ENCODE measurements at regions of chr2 and their contacts with region 1.

Region 1: DNA sequence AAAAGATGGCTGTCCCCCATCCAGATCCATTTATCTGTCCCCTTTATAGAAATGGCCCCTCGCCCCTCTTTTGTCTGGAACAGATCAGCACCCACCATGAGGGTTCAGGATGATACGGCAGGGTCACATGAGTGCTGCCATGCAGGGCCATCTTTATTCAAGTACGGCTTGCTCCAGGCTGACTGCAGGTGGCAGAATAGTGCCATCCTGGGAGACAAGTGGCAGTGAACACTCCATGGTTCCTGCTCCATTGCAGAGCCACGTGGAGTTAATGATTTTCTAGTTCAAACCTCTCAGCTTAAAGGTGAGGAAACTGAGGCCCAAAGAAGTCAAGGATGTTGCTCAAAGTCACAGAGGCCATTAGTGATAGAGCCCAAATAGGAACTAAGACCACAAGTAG is 180.6 kb downstream of the CLIP4 start:
- DNase-seq: peak in 1 of 2 donors; percentile 13
- ATAC-seq: no peak
- H3K4me3 ChIP-seq: no peak overlapping the region
- H3K4me3 Mint-ChIP-seq: no peak overlapping the region
- H3K27ac ChIP-seq: no peak overlapping the region
- H3K27ac Mint-ChIP-seq: no peak overlapping the region
- H3K4me1 ChIP-seq: no peaks in the 10 kb centered on the region
- H3K4me1 Mint-ChIP-seq: no peaks in the 10 kb centered on the region
- H3K27me3 ChIP-seq: peaks cover 8% of the 10 kb centered on the region
- H3K27me3 Mint-ChIP-seq: peaks cover 28 to 53% of the 10 kb centered on the region in 2 donors
- CTCF ChIP-seq: no peak

Region 2: GRCh38 chr2:29260151-29260772 is 35.6 kb before region 1 on chr2:
- intact Hi-C with region 1: no loop called
- DNase-seq: no peak
- ATAC-seq: no peak
- H3K4me3 ChIP-seq: no peak overlapping the region
- H3K4me3 Mint-ChIP-seq: no peak overlapping the region
- H3K27ac ChIP-seq: no peak overlapping the region
- H3K27ac Mint-ChIP-seq: no peak overlapping the region
- H3K4me1 ChIP-seq: no peaks in the 10 kb centered on the region
- H3K4me1 Mint-ChIP-seq: no peaks in the 10 kb centered on the region
- H3K27me3 ChIP-seq: no peaks in the 10 kb centered on the region
- H3K27me3 Mint-ChIP-seq: peaks cover 34 to 38% of the 10 kb centered on the region in 2 donors
- CTCF ChIP-seq: no peak

Region 3: GRCh38 chr2:29841386-29842004 is 545.6 kb after region 1 on chr2:
- intact Hi-C with region 1: loop called (anchors 5 kb)
- DNase-seq: peak in 1 of 2 donors; percentile 41
- ATAC-seq: peak in 2 of 3 donors; percentile 31 to 78
- H3K4me3 ChIP-seq: no peak overlapping the region
- H3K4me3 Mint-ChIP-seq: no peak overlapping the region
- H3K27ac ChIP-seq: no peak overlapping the region
- H3K27ac Mint-ChIP-seq: no peak overlapping the region
- H3K4me1 ChIP-seq: no peaks in the 10 kb centered on the region
- H3K4me1 Mint-ChIP-seq: no peaks in the 10 kb centered on the region
- H3K27me3 ChIP-seq: no peaks in the 10 kb centered on the region
- H3K27me3 Mint-ChIP-seq: peaks cover 14 to 49% of the 10 kb centered on the region in 2 donors
- CTCF ChIP-seq: peak; percentile 71

Measured in natural killer cell (primary cell).